ENCODE measurements at regions of chr12 and their contacts with region 1.

Region 1: DNA sequence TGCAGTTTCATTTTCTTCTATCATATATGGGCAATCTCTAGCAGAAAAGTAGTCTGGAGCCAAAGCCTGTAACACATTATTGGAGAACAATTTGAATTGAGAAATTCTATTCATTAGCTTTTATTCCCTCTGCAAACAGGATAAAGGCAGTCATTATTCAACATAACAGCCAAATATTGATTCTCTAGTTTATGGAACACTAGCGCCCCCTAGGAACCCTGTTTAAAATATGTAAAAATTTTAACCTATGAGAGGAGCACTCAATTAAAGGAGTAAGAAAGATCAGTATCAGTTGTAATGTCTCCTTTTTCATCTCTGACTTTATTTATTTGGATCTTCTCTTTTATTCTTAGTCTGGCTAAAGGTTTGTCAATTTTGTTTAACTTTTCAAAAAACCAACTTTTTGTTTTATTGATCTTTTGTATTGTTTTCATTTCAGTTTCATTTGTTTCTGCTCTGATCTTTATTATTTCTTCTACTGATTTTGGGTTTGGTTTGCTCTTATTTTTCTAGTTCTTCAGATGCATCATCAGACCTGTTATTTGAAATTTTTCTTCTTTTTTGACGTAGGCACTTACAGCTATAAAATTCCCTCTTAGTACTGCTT is 4.8 kb upstream of the LMNTD1 start:
- DNase-seq: peak; percentile 64
- H3K4me3 ChIP-seq: no peak overlapping the region
- H3K27ac ChIP-seq: no peak overlapping the region
- H3K4me1 ChIP-seq: no peaks in the 10 kb centered on the region
- H3K27me3 ChIP-seq: no peaks in the 10 kb centered on the region
- CTCF ChIP-seq: peak; percentile 70

Region 2: GRCh38 chr12:25436203-25437030 is 121.5 kb before region 1 on chr12:
- CTCF ChIA-PET with region 1: no interaction called
- POLR2A ChIA-PET with region 1: no interaction called
- intact Hi-C with region 1: loop called (anchors 5 kb)
- DNase-seq: peak; percentile 79
- H3K4me3 ChIP-seq: peak overlapping the region; percentile 27
- H3K27ac ChIP-seq: no peak overlapping the region
- H3K4me1 ChIP-seq: no peaks in the 10 kb centered on the region
- H3K27me3 ChIP-seq: no peaks in the 10 kb centered on the region
- CTCF ChIP-seq: peak; percentile 90

Region 3: GRCh38 chr12:25469861-25470260 is 88.1 kb before region 1 on chr12:
- CTCF ChIA-PET with region 1: no interaction called
- POLR2A ChIA-PET with region 1: no interaction called
- intact Hi-C with region 1: no loop called
- DNase-seq: no peak
- H3K4me3 ChIP-seq: no peak overlapping the region
- H3K27ac ChIP-seq: no peak overlapping the region
- H3K4me1 ChIP-seq: no peaks in the 10 kb centered on the region
- H3K27me3 ChIP-seq: no peaks in the 10 kb centered on the region
- CTCF ChIP-seq: no peak

Region 4: DNA sequence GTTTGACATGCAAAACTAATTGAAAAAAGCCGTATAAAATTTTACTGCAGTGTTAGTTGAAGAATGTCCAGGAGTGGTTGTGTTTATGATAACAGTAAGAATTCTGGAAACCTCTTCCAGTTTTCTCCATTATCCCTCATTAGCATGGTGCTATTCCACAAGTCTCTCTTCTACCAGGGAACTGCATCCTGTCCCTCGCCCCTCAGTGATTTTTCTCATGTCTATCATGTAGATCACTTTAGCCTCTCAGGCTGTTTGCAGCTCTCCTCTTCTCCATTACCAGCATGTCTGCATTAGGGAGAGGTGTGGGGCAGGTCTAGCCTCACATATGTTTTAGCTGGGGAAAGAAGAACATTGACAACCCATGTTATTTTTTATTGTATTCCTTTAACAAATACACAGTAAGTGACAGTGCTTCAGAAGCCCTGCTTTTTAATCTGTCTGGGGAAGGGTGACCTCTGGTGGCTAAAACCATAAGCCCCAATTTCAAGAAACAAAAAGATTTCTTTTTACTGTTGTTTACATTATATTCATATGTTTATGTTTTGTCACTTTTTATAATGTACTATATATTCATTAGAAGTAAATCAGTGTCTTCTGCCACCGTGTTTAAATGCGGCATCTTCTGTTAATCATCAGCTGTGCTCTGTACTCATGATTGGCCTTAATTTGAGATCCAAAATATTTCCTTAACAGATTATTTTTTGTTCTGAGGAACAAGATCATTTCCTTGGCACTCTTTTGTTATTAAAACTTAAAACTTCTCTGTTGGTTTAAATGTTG is 471.2 kb after region 1 on chr12:
- CTCF ChIA-PET with region 1: no interaction called
- POLR2A ChIA-PET with region 1: no interaction called
- intact Hi-C with region 1: loop called (anchors 10 kb)
- DNase-seq: peak; percentile 56
- H3K4me3 ChIP-seq: no peak overlapping the region
- H3K27ac ChIP-seq: no peak overlapping the region
- H3K4me1 ChIP-seq: peaks cover 25% of the 10 kb centered on the region
- H3K27me3 ChIP-seq: no peaks in the 10 kb centered on the region
- CTCF ChIP-seq: peak; percentile 83

Measured in A673 (cell line).